Activated CD8-positive, alpha-beta T cell treated with anti-CD3 and anti-CD28 coated beads, Interleukin-2, amount 10 ng/mL, durations not matched to agents 7 days and 5 days (primary cell): ENCODE measurements at regions of chr12 and their contacts with region 1.

Region 1: DNA sequence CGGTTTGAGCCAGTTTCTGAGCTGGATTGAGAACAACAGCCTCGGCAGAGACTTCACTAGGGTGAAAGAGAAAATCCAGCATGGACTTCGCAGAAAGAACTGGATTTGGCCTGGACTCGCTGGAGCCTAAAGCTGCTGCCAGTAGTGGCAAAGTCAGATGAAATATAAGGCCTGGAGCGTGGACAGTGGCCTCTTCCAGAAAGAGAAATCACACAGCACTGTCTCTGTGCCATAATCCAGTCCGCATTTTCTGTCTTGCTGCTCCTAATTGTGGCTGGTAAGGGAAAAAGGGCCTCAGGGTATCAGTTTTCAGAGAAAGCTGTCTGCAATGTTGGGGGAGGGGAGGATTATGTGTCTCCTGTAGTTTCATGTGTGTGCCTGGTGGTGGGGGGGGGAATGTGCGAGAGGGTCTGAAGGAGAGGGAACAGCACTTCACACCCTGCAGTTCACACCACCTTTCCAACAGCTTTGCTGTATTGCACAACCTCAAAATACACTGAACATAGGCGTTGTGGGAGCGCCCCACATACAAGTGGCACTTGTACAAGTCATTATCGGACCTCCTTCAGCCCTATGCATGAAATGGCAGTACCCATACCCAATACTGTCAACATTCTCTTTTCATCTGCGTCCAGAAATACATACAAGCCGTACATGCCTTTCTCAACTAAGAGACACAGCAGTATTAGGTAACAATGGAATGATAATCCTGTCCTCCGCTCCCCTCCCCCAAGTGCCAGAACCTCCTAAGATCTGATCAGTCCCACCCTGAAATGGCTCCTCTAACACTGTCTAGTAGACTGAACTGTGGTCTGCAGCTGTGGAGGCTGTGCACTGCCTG is 107.5 kb upstream of the ATF7IP start:
- DNase-seq: peak; percentile 87
- ATAC-seq: peak; percentile 67
- H3K4me3 Mint-ChIP-seq: peak overlapping the region; percentile 29
- H3K27ac Mint-ChIP-seq: peak overlapping the region; percentile 99
- H3K4me1 Mint-ChIP-seq: peaks cover 54% of the 10 kb centered on the region
- H3K27me3 Mint-ChIP-seq: no peaks in the 10 kb centered on the region

Region 2: DNA sequence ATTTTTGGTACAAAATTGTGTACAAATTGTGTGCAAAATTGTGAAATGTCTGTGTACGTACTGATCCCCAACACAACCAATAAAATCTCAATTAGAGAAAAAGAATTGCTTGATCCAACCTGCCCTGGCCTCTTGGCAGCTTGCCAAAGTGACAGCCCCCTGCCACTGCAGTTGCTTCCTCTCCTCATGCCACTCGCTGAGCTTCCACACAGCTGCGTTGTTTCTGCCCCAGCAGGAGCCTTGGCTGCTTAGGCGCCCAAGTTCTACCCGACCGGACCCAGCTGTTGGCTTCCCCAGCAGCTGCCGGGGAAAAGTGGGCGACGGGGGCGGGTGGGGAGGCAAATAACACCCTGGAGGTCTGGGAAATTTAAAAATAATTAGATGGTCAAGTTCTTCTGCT is 64.3 kb before region 1 on chr12:
- CTCF ChIA-PET with region 1: no interaction called
- POLR2A ChIA-PET with region 1: no interaction called
- DNase-seq: no peak
- ATAC-seq: no peak
- H3K4me3 Mint-ChIP-seq: no peak overlapping the region
- H3K27ac Mint-ChIP-seq: no peak overlapping the region
- H3K4me1 Mint-ChIP-seq: no peaks in the 10 kb centered on the region
- H3K27me3 Mint-ChIP-seq: peaks cover 3% of the 10 kb centered on the region

Region 3: GRCh38 chr12:14216405-14217294 is 41.3 kb before region 1 on chr12:
- CTCF ChIA-PET with region 1: no interaction called
- POLR2A ChIA-PET with region 1: no interaction called
- DNase-seq: no peak
- ATAC-seq: peak; percentile 68
- H3K4me3 Mint-ChIP-seq: peak overlapping the region; percentile 57
- H3K27ac Mint-ChIP-seq: peak overlapping the region; percentile 69
- H3K4me1 Mint-ChIP-seq: peaks cover 18% of the 10 kb centered on the region
- H3K27me3 Mint-ChIP-seq: no peaks in the 10 kb centered on the region

Region 4: DNA sequence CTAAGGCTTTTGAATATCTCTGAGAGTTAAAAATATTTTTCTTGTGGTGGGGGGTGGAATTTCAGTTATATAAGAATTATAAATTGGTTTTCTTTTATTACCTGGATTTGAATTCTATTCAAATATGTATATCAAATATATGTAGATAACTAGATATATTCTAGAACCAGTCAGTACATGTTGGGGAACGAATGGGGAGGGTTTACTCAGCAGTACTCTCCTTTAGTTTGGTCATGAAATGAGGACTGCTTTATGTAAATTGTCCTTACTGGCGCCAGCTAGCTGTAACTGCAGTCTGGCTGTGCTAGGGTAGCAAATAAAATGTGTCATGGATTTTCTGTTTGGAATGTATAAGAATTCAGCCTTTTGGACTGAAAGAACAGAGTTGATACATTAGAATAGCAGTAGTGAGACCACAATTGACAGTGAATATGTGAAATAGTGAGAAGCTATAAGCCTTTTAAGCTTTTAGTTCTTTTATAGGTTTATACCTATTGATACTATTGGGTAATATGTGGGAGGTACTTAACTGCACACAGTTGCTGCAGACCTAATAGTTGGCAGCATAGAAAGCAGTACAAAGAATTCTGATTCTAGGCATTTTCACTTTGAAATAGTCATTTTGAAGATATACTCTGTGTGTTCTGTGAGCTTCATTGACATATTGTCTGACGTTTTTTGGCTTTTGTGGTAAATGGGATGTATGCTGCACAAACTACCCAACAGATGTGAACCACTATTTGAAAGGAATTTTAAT is 136.5 kb after region 1 on chr12:
- CTCF ChIA-PET with region 1: interaction called, 10 read pairs
- POLR2A ChIA-PET with region 1: interaction called, 28 read pairs
- DNase-seq: peak; percentile 67
- ATAC-seq: peak; percentile 78
- H3K4me3 Mint-ChIP-seq: peak overlapping the region; percentile 83
- H3K27ac Mint-ChIP-seq: peak overlapping the region; percentile 92
- H3K4me1 Mint-ChIP-seq: peaks cover 79% of the 10 kb centered on the region
- H3K27me3 Mint-ChIP-seq: no peaks in the 10 kb centered on the region

Region 5: GRCh38 chr12:14417715-14418114 is 159.8 kb after region 1 on chr12:
- CTCF ChIA-PET with region 1: interaction called, 8 read pairs
- POLR2A ChIA-PET with region 1: interaction called, 11 read pairs
- DNase-seq: peak; percentile 85
- ATAC-seq: peak; percentile 76
- H3K4me3 Mint-ChIP-seq: peak overlapping the region; percentile 72
- H3K27ac Mint-ChIP-seq: peak overlapping the region; percentile 91
- H3K4me1 Mint-ChIP-seq: peaks cover 60% of the 10 kb centered on the region
- H3K27me3 Mint-ChIP-seq: no peaks in the 10 kb centered on the region